ENCODE measurements at regions of chr20 and their contacts with region 1.

Region 1: GRCh38 chr20:49009899-49010631 is 36.0 kb upstream of the CSE1L start:
- DNase-seq: no peak
- H3K4me3 ChIP-seq: no peak overlapping the region
- H3K27ac ChIP-seq: no peak overlapping the region
- H3K4me1 ChIP-seq: no peaks in the 10 kb centered on the region
- H3K27me3 ChIP-seq: no peaks in the 10 kb centered on the region
- CTCF ChIP-seq: no peak

Region 2: GRCh38 chr20:48360337-48360708 is 649.7 kb before region 1 on chr20:
- intact Hi-C with region 1: no loop called
- DNase-seq: no peak
- H3K4me3 ChIP-seq: no peak overlapping the region
- H3K27ac ChIP-seq: no peak overlapping the region
- H3K4me1 ChIP-seq: no peaks in the 10 kb centered on the region
- H3K27me3 ChIP-seq: no peaks in the 10 kb centered on the region
- CTCF ChIP-seq: no peak

Region 3: GRCh38 chr20:49078296-49078695 is 68.2 kb after region 1 on chr20:
- intact Hi-C with region 1: loop called (anchors 10 kb)
- DNase-seq: no peak
- H3K4me3 ChIP-seq: no peak overlapping the region
- H3K27ac ChIP-seq: no peak overlapping the region
- H3K4me1 ChIP-seq: no peaks in the 10 kb centered on the region
- H3K27me3 ChIP-seq: no peaks in the 10 kb centered on the region
- CTCF ChIP-seq: no peak